Activated T-helper 2 cell treated with anti-CD3 and anti-CD28 coated beads, Interferon-gamma antibody, Interleukin-2, Interleukin-4, amounts not matched to agents 10 μg/mL and 5 μg/mL and 100 μg/mL, durations not matched to agents 14 hours and 24 hours and 36 hours (primary cell): ENCODE measurements at regions of chr17 and their contacts with region 1.

Region 1: DNA sequence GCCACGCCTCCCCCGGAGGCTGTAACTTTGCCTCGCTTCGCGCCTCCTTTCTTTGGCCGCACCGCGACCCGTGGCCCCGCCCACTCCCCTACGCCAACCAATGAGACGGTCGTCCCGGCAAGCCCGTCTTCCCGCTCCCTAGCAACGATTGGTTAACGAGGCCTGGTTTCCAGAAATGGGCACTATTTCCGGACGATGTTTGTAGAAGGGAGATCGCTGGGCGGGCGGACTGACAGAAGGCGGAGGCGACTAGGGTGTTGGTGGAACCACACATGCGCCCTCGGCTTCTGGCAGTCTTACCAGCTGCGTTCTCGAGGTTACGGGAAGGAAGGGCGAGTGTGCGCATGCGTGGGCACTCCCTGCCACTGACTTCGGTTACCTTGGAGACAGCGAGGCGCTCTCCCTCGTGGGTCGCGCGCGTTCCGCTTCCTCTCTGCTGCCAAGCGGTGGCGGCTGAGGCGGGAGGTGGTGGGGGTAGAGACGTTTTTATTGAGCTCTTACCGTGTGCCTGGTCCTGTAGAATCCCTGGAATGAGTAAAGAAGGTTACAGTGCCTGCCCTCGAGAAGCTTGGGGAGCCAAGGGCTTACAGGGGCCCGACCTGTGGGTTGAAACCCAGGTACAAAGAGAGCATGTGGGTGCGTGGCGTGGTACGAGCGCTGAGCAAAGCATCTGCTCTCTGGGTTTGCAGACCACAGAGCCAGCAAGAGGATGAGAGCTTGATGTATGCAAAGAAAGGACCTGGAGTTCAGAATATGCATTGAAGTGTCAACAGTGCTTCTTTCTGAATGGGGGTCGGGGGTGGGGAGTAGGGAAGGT is 500 bp upstream of the MAP3K14 start:
- DNase-seq: peak; percentile 100
- H3K4me3 Mint-ChIP-seq: peak overlapping the region; percentile 83
- H3K27ac Mint-ChIP-seq: peak overlapping the region; percentile 90
- H3K4me1 Mint-ChIP-seq: peaks cover 66% of the 10 kb centered on the region
- H3K27me3 Mint-ChIP-seq: peaks cover 1% of the 10 kb centered on the region

Region 2: DNA sequence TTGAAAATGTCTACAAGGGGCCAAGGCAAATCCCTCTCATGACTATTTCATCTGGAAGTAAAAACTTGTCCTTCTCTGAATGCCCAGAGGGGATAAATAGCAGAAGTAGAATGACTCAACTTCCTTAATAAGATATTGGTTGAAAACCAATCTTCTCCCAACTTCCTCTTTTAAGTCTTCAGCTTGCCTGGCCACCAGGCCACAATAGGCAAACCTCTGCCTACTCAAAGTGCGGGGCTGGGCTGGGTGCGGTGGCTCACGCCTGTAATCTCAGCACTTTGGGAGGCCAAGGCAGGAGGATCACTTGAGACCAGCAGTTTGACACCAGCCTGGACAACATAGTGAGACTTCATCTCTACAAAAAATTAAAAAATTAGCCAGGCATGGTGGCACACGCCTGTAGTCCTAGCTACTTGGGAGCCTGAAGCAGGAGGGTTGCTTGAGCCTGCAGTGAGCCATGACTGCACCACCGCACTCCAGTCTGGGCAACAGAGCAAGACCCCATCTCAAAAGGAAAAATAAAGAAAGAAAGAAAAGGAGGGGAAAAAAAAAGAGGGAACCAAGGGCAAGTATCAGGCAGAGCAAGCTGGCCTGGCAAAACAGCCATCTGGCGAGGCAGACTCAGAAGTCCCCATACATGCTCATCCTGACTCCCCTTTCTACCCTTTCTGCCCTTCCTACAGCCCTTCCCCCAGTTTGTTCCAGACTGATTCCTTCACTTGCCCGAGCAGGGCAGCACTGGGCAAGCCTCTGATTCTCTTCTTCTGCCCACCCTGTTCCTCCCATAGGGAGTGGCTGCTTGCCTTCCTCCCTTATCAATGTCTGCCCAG is 21.1 kb before region 1 on chr17:
- intact Hi-C with region 1: loop called (anchors 2 kb)
- DNase-seq: no peak
- H3K4me3 Mint-ChIP-seq: no peak overlapping the region
- H3K27ac Mint-ChIP-seq: peak overlapping the region; percentile 46
- H3K4me1 Mint-ChIP-seq: peaks cover 75% of the 10 kb centered on the region
- H3K27me3 Mint-ChIP-seq: no peaks in the 10 kb centered on the region

Region 3: GRCh38 chr17:45341533-45342158 is 24.3 kb after region 1 on chr17:
- intact Hi-C with region 1: no loop called
- DNase-seq: no peak
- H3K4me3 Mint-ChIP-seq: no peak overlapping the region
- H3K27ac Mint-ChIP-seq: no peak overlapping the region
- H3K4me1 Mint-ChIP-seq: no peaks in the 10 kb centered on the region
- H3K27me3 Mint-ChIP-seq: peaks cover 6% of the 10 kb centered on the region

Region 4: DNA sequence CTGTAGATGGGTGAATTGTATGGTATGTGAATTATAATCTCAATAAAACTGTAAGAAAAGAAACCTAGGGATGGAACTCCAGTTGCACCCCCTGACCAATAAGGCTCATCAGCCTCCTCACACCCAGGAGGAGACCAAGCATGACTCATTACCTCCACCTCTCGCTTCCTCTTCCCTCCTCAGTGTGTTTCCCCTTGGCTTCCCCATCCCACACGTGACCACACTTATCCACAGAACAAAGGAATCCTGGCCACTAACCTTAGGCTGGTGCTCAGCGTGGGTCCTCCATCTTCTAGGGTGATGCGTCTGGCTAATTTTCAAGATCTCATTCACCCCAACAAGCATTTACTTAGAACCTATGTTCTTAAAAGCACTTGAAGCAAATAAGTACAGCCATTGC is 35.7 kb after region 1 on chr17:
- intact Hi-C with region 1: loop called (anchors 2 kb)
- DNase-seq: no peak
- H3K4me3 Mint-ChIP-seq: no peak overlapping the region
- H3K27ac Mint-ChIP-seq: peak overlapping the region; percentile 47
- H3K4me1 Mint-ChIP-seq: peaks cover 19% of the 10 kb centered on the region
- H3K27me3 Mint-ChIP-seq: peaks cover 22% of the 10 kb centered on the region

Region 5: DNA sequence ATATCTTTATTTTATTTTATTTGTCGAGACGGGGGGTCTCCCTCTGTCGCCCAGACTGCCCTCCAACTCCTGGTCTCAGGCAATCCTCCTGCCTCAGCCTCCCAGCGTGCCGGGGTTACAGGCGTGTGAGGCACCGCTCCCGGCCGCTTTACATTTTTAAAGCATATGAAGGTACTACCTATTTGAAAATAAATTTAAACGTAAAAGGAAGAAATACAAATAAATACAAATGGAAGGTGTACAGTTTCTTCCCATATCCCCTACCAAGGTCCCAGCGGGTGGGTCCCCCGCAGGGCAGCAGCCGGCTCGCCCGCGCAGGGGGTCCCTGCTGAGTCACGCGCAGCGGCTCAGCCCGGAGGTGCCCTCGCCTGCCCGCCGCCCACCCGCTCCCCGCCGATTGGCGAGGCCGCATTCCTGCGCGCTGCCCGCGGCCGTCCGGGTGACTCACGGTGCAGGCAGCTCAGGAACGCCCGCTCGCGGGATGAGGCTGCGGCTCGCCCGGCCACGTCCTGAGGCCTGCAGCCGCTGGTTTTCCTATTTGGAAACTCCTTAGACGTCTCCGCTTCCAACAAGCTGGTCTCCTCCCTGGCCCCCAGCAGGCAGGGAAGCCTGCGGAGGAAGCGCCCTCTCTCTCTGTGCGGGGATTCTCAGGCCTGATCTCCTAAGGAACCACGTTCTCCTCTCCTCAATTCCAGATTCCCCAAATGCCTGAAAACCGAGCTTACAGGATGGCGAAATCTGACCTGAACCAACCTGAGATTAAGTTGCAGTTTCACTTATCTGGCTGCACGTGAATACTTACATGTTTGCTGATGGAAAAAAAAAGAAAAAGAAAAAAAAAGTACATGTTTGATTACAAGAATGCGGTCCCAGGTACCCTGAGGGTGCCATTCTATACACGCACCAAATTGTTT is 54.4 kb after region 1 on chr17:
- intact Hi-C with region 1: loop called (anchors 5 kb)
- DNase-seq: no peak
- H3K4me3 Mint-ChIP-seq: peak overlapping the region; percentile 35
- H3K27ac Mint-ChIP-seq: no peak overlapping the region
- H3K4me1 Mint-ChIP-seq: peaks cover 16% of the 10 kb centered on the region
- H3K27me3 Mint-ChIP-seq: peaks cover 10% of the 10 kb centered on the region

Region 6: DNA sequence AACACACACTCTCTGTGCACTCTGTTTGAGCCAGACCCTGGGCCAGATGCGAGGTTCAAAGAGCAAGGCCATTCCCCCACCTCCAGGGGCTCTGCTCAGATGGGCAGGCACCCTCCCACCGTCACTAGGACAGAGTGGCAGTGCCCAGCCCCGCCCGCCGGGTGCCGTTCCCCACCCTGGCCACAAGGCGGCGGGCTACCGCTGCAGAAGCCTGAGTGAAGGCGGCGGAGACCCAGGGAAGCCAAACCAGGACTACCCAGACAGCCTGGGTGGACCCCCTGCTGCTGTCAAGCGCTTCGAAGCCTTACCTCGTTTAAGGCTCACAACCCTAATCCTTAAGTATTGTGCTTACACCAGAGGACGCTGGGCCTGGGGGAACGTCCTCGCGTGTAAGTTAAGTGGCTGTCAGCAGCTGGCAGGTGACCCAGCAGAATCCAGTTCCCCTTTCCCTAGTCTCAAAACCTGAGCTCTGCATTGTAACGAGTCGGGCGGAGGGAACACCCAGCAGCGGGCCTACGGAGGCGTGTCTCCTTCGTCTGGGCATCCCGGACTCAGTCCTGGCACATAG is 110.8 kb after region 1 on chr17:
- intact Hi-C with region 1: no loop called
- DNase-seq: peak; percentile 77
- H3K4me3 Mint-ChIP-seq: peak overlapping the region; percentile 14
- H3K27ac Mint-ChIP-seq: no peak overlapping the region
- H3K4me1 Mint-ChIP-seq: peaks cover 21% of the 10 kb centered on the region
- H3K27me3 Mint-ChIP-seq: no peaks in the 10 kb centered on the region